ENCODE measurements at regions of chr7 and their contacts with region 1.

Region 1: DNA sequence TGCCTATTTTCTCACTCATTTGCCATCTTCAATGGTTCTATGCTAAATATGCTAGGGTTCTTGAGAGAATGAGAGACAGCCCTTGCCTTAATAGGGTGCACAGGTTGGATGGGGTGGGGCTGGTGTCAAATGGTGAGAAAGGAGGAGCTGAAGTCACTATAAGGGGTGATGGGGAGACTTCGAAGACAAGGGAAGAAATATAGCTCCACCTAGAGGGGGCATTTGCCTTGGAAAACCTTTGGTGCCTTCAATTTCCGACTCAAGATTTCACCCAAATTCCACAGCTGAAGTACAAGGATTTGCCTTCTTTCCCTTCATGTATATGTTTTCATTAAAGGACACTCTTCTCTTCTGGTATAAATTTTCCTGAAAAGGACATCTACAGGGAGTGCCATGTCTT is 5.6 kb downstream of the PTN start:
- DNase-seq: no peak
- H3K4me3 ChIP-seq: no peak overlapping the region
- H3K4me3 Mint-ChIP-seq: no peak overlapping the region
- H3K27ac ChIP-seq: no peak overlapping the region
- H3K27ac Mint-ChIP-seq: no peak overlapping the region
- H3K4me1 ChIP-seq: no peaks in the 10 kb centered on the region
- H3K4me1 Mint-ChIP-seq: no peaks in the 10 kb centered on the region
- H3K27me3 ChIP-seq: no peaks in the 10 kb centered on the region
- H3K27me3 Mint-ChIP-seq: no peaks in the 10 kb centered on the region
- CTCF ChIP-seq: no peak

Region 2: DNA sequence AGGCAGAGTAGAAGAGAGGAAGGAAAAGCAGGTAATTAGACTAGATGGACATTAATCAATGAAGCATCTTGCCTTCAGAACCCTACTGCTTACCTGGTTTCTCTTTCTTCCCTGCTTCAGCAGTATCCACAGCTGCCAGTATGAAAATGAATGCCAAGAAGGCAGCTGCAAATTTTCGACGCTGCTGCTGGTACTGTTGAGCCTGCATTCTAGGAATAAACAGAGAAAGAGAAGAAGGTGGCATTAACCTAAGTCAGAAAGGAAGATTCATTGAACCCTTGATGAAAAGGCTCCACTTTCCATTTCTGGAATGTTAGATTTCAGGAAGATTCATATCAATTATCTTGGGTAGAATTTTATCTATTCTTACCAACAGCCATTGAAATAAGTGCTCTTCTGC is 83.1 kb before region 1 on chr7:
- intact Hi-C with region 1: no loop called
- DNase-seq: no peak
- H3K4me3 ChIP-seq: no peak overlapping the region
- H3K4me3 Mint-ChIP-seq: no peak overlapping the region
- H3K27ac ChIP-seq: no peak overlapping the region
- H3K27ac Mint-ChIP-seq: no peak overlapping the region
- H3K4me1 ChIP-seq: no peaks in the 10 kb centered on the region
- H3K4me1 Mint-ChIP-seq: no peaks in the 10 kb centered on the region
- H3K27me3 ChIP-seq: no peaks in the 10 kb centered on the region
- H3K27me3 Mint-ChIP-seq: peaks cover 0 to 2% (median 1%) of the 10 kb centered on the region in 3 donors
- CTCF ChIP-seq: no peak

Region 3: DNA sequence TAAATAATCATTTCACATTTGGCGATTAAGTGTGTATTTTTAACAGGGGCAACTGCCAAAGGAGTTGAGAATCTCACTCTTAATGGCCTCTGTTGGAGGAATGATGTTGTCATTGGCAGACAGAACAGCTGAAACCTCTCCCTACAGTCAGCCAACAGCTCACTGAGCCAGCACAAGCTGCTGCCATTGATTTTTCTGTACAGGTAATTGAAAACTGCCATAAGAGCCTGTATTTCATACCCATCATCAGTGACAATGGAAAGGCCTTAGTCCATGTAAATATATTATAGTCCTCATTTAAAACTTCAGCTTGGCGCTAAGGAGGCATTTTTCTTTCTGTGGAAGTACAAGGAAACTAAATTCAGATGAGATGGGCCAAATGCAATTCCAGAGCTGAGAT is 33.7 kb after region 1 on chr7:
- intact Hi-C with region 1: loop called in 1 of 2 experiments (anchors 2 kb)
- DNase-seq: no peak
- H3K4me3 ChIP-seq: no peak overlapping the region
- H3K4me3 Mint-ChIP-seq: no peak overlapping the region
- H3K27ac ChIP-seq: no peak overlapping the region
- H3K27ac Mint-ChIP-seq: no peak overlapping the region
- H3K4me1 ChIP-seq: no peaks in the 10 kb centered on the region
- H3K4me1 Mint-ChIP-seq: no peaks in the 10 kb centered on the region
- H3K27me3 ChIP-seq: no peaks in the 10 kb centered on the region
- H3K27me3 Mint-ChIP-seq: no peaks in the 10 kb centered on the region
- CTCF ChIP-seq: no peak